CD14-positive monocyte (primary cell): ENCODE measurements at regions of chr3 and their contacts with region 1.

Region 1: DNA sequence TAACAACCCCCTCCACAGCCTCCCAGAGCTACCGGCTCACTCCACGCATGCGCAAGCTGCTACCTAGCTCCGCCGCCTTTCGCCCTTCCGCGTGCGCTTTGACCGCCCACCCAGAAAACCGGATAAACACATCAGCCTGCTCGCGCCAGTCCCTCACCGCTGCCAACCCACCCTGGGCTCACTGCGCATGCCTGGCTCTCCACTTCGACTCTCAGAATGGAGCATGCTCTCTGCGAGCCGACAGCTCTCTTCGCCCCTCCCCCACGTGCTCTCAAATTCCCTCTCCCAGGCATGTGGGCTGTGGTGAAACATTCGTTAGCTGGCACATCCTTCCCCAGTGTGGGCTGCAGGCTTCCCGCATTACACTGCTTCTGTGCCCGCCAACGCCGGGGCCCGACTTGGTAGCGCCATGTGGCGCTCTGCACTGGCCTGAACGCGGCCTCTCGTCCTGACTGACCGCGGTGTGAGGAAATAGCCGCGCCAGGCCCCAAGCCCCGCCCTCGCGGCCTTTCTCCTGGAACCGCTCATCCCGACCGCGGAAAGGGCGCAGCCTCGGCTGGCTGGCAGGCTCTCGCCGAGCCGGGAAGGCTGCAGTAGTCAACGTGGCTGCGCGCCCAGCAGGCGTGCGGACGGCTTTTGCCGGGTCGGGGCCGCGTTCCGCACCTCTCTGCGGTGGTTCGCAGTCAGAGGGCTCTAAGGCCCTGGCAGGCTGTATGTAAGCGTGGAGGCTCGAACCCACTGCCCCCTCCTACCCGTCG is 445 bp upstream of the MSL2 start:
- DNase-seq: peak; percentile 97 to 98 (median 97)
- H3K4me3 ChIP-seq: peak overlapping the region; percentile 92 to 99 (median 94)
- H3K4me3 Mint-ChIP-seq: peak overlapping the region; percentile 94 to 98
- H3K27ac ChIP-seq: peak overlapping the region; percentile 91 to 94
- H3K27ac Mint-ChIP-seq: peak overlapping the region; percentile 94 to 98 (median 97)
- H3K4me1 ChIP-seq: peaks cover 29 to 43% of the 10 kb centered on the region in 2 donors
- H3K4me1 Mint-ChIP-seq: peaks cover 38% of the 10 kb centered on the region
- H3K27me3 ChIP-seq: no peaks in the 10 kb centered on the region
- H3K27me3 Mint-ChIP-seq: peaks cover 0 to 2% (median 2%) of the 10 kb centered on the region in 3 donors
- CTCF ChIP-seq: no peak

Region 2: DNA sequence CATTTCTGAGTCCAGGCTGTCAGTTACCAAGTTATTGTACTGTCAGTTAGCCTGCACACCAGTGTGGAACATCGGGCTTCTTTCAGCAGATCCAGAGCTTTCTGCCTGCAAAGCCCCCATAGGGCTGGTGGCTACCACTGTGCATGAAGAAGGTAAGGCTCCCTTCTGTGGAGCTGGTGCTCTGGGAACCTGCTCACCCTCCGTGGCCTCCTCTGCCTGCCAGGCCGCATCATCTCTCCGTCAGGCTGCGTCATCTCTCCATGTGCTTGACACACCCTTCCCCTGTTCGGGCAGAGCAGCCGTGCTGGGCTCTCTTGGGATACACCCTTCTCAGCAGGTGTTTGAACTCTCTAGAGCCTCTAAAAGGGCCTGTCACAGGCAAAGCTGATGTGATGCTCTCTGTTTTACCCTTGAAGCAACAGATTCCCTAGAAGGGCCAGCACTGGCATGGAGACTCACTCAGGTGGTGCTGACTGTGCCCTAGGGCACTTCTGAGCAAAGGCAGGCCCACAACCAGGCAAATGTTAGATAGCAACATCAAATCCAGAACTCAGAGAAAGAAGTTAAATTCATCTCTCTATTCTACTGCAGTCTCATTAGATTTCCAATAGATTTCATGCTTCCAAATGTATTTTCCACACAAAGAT is 1140.4 kb before region 1 on chr3:
- intact Hi-C with region 1: no loop called
- DNase-seq: no peak
- H3K4me3 ChIP-seq: no peak overlapping the region
- H3K4me3 Mint-ChIP-seq: no peak overlapping the region
- H3K27ac ChIP-seq: no peak overlapping the region
- H3K27ac Mint-ChIP-seq: no peak overlapping the region
- H3K4me1 ChIP-seq: no peaks in the 10 kb centered on the region
- H3K4me1 Mint-ChIP-seq: no peaks in the 10 kb centered on the region
- H3K27me3 ChIP-seq: no peaks in the 10 kb centered on the region
- H3K27me3 Mint-ChIP-seq: peaks cover 0 to 5% (median 5%) of the 10 kb centered on the region in 3 donors
- CTCF ChIP-seq: no peak

Region 3: GRCh38 chr3:136250226-136250902 is 53.8 kb after region 1 on chr3 and contains the start of gene PCCB:
- intact Hi-C with region 1: loop called (anchors 2 to 5 kb)
- DNase-seq: peak; percentile 87 to 92 (median 89)
- H3K4me3 ChIP-seq: peak within 1 kb of the TSS; percentile 58 to 83 (median 69)
- H3K4me3 Mint-ChIP-seq: peak within 1 kb of the TSS; percentile 86 to 91
- H3K27ac ChIP-seq: peak within 1 kb of the TSS; percentile 76 to 79
- H3K27ac Mint-ChIP-seq: peak within 1 kb of the TSS; percentile 79 to 95 (median 92)
- H3K4me1 ChIP-seq: peaks cover 16% of the 10 kb centered on the region in 2 donors
- H3K4me1 Mint-ChIP-seq: peaks cover 22% of the 10 kb centered on the region
- H3K27me3 ChIP-seq: no peaks in the 10 kb centered on the region
- H3K27me3 Mint-ChIP-seq: peaks cover under 1 to 3% (median 1%) of the 10 kb centered on the region in 3 donors
- CTCF ChIP-seq: peak; percentile 87
- polyA plus RNA-seq, gene PCCB: 13.1 to 41.7 (median 31.6) TPM

Region 4: DNA sequence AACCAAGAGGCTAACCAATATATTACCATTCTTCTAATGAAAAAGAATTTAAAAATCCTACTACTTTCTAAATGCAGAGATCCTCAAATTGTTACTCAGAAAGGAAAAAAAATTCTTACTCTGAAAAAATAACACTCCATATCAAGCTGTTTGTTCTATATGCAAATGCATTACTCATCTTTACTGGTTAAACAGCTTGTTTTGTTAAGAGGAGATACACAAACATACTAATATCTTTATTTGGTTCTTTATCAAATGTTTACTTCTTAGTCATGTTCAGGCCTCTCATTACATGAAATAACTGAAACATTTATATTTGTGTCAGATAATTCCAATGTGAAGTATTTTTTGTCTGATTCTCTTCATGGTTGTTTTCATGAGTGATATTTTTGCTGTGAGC is 200.3 kb after region 1 on chr3:
- intact Hi-C with region 1: no loop called
- DNase-seq: no peak
- H3K4me3 ChIP-seq: no peak overlapping the region
- H3K4me3 Mint-ChIP-seq: no peak overlapping the region
- H3K27ac ChIP-seq: no peak overlapping the region
- H3K27ac Mint-ChIP-seq: peak overlapping the region in 1 of 7 donors; percentile 15
- H3K4me1 ChIP-seq: no peaks in the 10 kb centered on the region
- H3K4me1 Mint-ChIP-seq: no peaks in the 10 kb centered on the region
- H3K27me3 ChIP-seq: no peaks in the 10 kb centered on the region
- H3K27me3 Mint-ChIP-seq: no peaks in the 10 kb centered on the region
- CTCF ChIP-seq: no peak

Region 5: DNA sequence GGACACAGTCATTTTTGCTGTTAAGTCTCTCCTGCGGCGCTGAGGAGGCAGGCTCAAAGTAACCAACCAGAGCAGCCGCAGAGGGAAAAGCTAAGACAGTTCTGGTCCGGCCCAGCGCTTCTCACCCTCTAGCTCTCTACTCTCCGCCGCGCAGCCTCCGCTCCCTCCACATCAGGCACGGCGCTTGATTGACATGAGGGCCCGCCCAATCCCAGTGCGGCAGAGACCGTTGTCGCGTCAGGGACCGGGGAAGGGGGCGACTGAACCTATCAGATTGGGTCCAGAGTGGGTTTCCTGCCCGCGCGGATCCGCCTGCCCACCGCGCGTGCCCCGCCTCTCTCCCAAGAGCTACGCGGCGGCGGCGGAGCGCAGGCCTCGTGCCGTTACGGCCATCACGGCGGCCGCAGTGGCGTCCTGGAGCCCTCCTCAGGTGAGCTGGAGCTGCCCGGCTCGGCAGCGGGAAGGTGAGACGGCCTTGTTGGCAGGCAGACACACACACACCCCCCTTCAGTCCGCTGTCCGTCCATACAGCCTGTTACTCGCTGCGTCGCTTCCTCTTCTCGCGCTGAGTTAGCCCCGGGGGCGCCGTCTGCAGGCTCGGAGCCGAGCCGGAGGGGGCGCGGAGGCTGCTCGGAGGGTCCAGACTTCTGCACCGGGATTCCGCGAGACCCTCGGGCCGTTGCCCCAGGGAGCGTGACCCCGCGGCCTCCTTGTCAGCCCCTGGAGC is 665.5 kb after region 1 on chr3 and contains the start of gene NCK1:
- intact Hi-C with region 1: loop called in 1 of 2 experiments (anchors 10 kb)
- DNase-seq: peak; percentile 92 to 94 (median 93)
- H3K4me3 ChIP-seq: peak within 1 kb of the TSS; percentile 78 to 97 (median 88)
- H3K4me3 Mint-ChIP-seq: peak within 1 kb of the TSS; percentile 89 to 96
- H3K27ac ChIP-seq: peak within 1 kb of the TSS; percentile 87 to 96
- H3K27ac Mint-ChIP-seq: peak within 1 kb of the TSS; percentile 93 to 97 (median 95)
- H3K4me1 ChIP-seq: peaks cover 38 to 56% of the 10 kb centered on the region in 2 donors
- H3K4me1 Mint-ChIP-seq: peaks cover 63% of the 10 kb centered on the region
- H3K27me3 ChIP-seq: no peaks in the 10 kb centered on the region
- H3K27me3 Mint-ChIP-seq: peaks cover 0 to 2% (median 0%) of the 10 kb centered on the region in 3 donors
- CTCF ChIP-seq: no peak
- polyA plus RNA-seq, gene NCK1: 20.4 to 28.8 (median 22.8) TPM